Activated CD4-positive, alpha-beta T cell treated with anti-CD3 and anti-CD28 coated beads for 36 hours (primary cell): ENCODE measurements at regions of chr7 and their contacts with region 1.

Region 1: GRCh38 chr7:76020031-76020714 is 25.8 kb upstream of the TMEM120A start:
- DNase-seq: peak; percentile 84
- ATAC-seq: peak; percentile 82
- H3K4me3 Mint-ChIP-seq: no peak overlapping the region
- H3K27ac Mint-ChIP-seq: no peak overlapping the region
- H3K4me1 Mint-ChIP-seq: peaks cover 8% of the 10 kb centered on the region
- H3K27me3 Mint-ChIP-seq: no peaks in the 10 kb centered on the region

Region 2: GRCh38 chr7:75866489-75867389 is 153.4 kb before region 1 on chr7:
- CTCF ChIA-PET with region 1: interaction called, 70 read pairs
- POLR2A ChIA-PET with region 1: no interaction called
- intact Hi-C with region 1: loop called (anchors 1 kb)
- DNase-seq: peak; percentile 69
- ATAC-seq: peak; percentile 74
- H3K4me3 Mint-ChIP-seq: no peak overlapping the region
- H3K27ac Mint-ChIP-seq: no peak overlapping the region
- H3K4me1 Mint-ChIP-seq: peaks cover 24% of the 10 kb centered on the region
- H3K27me3 Mint-ChIP-seq: peaks cover 8% of the 10 kb centered on the region

Region 3: GRCh38 chr7:75872073-75872782 is 147.9 kb before region 1 on chr7:
- CTCF ChIA-PET with region 1: interaction called, 70 read pairs
- POLR2A ChIA-PET with region 1: no interaction called
- intact Hi-C with region 1: no loop called
- DNase-seq: no peak
- ATAC-seq: no peak
- H3K4me3 Mint-ChIP-seq: no peak overlapping the region
- H3K27ac Mint-ChIP-seq: no peak overlapping the region
- H3K4me1 Mint-ChIP-seq: peaks cover 25% of the 10 kb centered on the region
- H3K27me3 Mint-ChIP-seq: no peaks in the 10 kb centered on the region

Region 4: GRCh38 chr7:76031964-76032363 is 11.8 kb after region 1 on chr7:
- CTCF ChIA-PET with region 1: interaction called, 11 read pairs
- POLR2A ChIA-PET with region 1: no interaction called
- intact Hi-C with region 1: no loop called
- DNase-seq: no peak
- ATAC-seq: no peak
- H3K4me3 Mint-ChIP-seq: no peak overlapping the region
- H3K27ac Mint-ChIP-seq: no peak overlapping the region
- H3K4me1 Mint-ChIP-seq: peaks cover 6% of the 10 kb centered on the region
- H3K27me3 Mint-ChIP-seq: no peaks in the 10 kb centered on the region

Region 5: DNA sequence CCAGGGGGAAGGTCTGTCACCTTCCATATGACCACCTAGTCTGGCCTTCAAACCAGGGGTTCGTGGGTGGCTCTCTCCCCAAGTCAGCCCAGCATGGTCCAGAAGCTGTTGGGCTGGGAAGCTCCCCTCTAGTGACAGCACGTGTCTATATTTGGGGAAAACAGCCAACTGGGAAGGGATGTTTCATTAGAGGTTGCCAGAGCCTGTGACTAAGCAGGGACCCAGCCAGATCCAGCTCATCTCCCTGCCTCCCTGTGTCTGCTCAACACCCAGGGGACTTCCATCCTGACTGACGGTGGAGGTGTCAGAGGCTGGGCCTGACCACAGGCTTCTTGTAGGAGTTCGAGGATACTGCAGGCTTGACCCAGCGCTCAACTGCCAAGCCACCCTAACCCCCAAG is 17.1 kb after region 1 on chr7:
- CTCF ChIA-PET with region 1: interaction called, 11 read pairs
- POLR2A ChIA-PET with region 1: no interaction called
- intact Hi-C with region 1: no loop called
- DNase-seq: no peak
- ATAC-seq: no peak
- H3K4me3 Mint-ChIP-seq: no peak overlapping the region
- H3K27ac Mint-ChIP-seq: no peak overlapping the region
- H3K4me1 Mint-ChIP-seq: peaks cover 6% of the 10 kb centered on the region
- H3K27me3 Mint-ChIP-seq: no peaks in the 10 kb centered on the region